ENCODE measurements at regions of chr14 and their contacts with region 1.

Region 1: GRCh38 chr14:96100161-96101029 is 61.2 kb downstream of the C14orf132 start:
- DNase-seq: peak; percentile 80 to 85 (median 81)
- ATAC-seq: peak; percentile 25 to 43 (median 34)
- H3K4me3 ChIP-seq: no peak overlapping the region
- H3K27ac ChIP-seq: peak overlapping the region in 1 of 3 donors; percentile 18
- H3K4me1 ChIP-seq: peaks cover 0 to 56% (median 22%) of the 10 kb centered on the region in 4 donors
- H3K27me3 ChIP-seq: no peaks in the 10 kb centered on the region
- CTCF ChIP-seq: peak; percentile 84 to 93 (median 85)
- POLR2A ChIP-seq: no peak

Region 2: GRCh38 chr14:95614349-95614748 is 486.0 kb before region 1 on chr14:
- intact Hi-C with region 1: no loop called
- DNase-seq: no peak
- ATAC-seq: no peak
- H3K4me3 ChIP-seq: no peak overlapping the region
- H3K27ac ChIP-seq: no peak overlapping the region
- H3K4me1 ChIP-seq: no peaks in the 10 kb centered on the region
- H3K27me3 ChIP-seq: no peaks in the 10 kb centered on the region
- CTCF ChIP-seq: no peak
- POLR2A ChIP-seq: no peak

Region 3: GRCh38 chr14:96001866-96002497 is 98.4 kb before region 1 on chr14:
- intact Hi-C with region 1: loop called in 1 of 2 experiments (anchors 10 kb)
- DNase-seq: no peak
- ATAC-seq: no peak
- H3K4me3 ChIP-seq: no peak overlapping the region
- H3K27ac ChIP-seq: no peak overlapping the region
- H3K4me1 ChIP-seq: no peaks in the 10 kb centered on the region
- H3K27me3 ChIP-seq: no peaks in the 10 kb centered on the region
- CTCF ChIP-seq: no peak
- POLR2A ChIP-seq: no peak

Region 4: DNA sequence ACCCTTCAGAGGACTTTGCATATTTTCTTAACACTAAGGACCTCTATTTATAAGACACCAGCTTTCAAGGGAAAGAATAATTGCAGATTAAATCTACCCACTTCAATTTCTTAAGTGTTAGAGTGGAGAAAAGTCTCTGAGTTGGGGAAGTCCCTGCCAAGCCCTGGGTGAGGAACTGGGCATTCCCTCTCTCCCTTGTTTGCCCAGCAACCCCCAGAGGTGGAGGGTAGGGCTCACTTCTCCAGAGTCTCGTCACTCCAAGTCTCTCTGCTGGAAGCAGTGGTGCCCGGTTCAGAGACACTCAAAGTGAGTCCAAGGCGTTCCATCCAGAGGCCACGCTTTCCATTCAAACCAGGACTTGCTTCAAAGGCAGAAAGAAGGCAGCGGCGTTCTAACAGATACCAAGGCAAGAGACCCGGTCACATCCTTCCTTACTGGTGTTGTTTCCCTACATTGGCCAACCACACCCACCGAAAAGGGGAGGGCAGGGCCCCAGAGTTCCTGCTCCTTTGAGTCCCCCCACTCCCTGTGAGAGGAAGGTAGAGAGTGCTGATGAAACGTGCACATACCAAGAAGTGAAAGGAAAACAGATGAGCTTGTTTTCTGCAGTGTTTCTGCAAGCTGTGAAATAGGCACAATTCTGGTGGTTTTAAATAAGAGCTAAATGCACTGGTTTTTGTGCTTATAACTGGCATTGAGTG is 98.2 kb after region 1 on chr14:
- intact Hi-C with region 1: loop called in 1 of 2 experiments (anchors 10 kb)
- DNase-seq: no peak
- ATAC-seq: peak in 2 of 4 donors; percentile 16 to 48
- H3K4me3 ChIP-seq: no peak overlapping the region
- H3K27ac ChIP-seq: no peak overlapping the region
- H3K4me1 ChIP-seq: peaks cover 0 to 14% (median 0%) of the 10 kb centered on the region in 4 donors
- H3K27me3 ChIP-seq: no peaks in the 10 kb centered on the region
- CTCF ChIP-seq: no peak
- POLR2A ChIP-seq: no peak

Region 5: GRCh38 chr14:96268431-96269358 is 168.3 kb after region 1 on chr14:
- intact Hi-C with region 1: loop called (anchors 5 kb)
- DNase-seq: peak in 1 of 3 donors; percentile 70
- ATAC-seq: peak; percentile 52 to 80 (median 76)
- H3K4me3 ChIP-seq: peak overlapping the region in 1 of 3 donors; percentile 14
- H3K27ac ChIP-seq: peak overlapping the region in 1 of 3 donors; percentile 40
- H3K4me1 ChIP-seq: peaks cover 0 to 11% (median 0%) of the 10 kb centered on the region in 4 donors
- H3K27me3 ChIP-seq: no peaks in the 10 kb centered on the region
- CTCF ChIP-seq: no peak
- POLR2A ChIP-seq: no peak

Region 6: DNA sequence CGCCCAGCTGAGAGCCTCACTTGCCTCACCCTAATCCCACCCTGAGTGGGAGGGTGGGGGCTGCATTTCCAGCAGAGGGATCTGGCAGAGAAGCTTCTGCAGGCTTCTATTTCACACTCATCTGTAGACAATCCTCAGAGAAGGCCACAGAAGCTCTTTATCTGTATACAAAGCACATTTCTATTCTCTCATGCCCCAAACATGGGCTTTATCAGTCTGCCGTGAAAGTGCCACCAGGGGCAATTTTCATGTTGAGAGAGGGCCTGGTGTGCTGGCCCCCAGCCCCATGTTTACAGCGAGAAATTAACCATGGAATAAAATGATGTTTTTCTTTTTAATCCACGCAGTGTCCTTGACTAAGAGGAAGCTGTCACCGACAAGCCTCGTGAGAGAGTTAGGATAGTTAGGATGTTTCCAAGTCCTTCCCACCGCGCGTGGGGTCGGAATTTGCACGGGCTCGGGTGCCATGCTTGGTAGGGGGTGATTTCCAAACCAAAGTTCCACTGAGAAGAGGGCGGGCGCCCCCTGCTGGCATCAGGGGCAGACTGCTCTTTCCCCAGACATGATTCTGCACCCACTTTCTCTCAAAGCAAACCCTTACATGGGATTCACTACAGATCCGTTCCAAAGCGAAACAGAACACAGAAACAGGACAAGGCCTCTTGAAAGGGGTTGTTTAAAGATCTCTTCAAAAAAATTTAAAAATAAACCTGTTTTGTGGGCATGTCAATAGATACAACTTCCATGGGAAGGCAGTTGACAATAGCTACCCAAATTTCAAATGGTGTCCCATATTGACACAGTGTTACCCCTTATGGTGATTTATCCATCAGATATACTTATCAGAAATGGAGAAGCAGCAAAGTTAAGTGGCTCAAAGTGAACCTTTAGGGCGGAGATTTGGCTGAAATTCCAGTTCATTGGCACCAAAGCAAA is 175.1 kb after region 1 on chr14:
- intact Hi-C with region 1: loop called in 1 of 2 experiments (anchors 5 kb)
- DNase-seq: peak; percentile 74 to 76 (median 75)
- ATAC-seq: peak; percentile 74 to 91 (median 84)
- H3K4me3 ChIP-seq: no peak overlapping the region
- H3K27ac ChIP-seq: no peak overlapping the region
- H3K4me1 ChIP-seq: no peaks in the 10 kb centered on the region
- H3K27me3 ChIP-seq: no peaks in the 10 kb centered on the region
- CTCF ChIP-seq: peak; percentile 88 to 97 (median 94)
- POLR2A ChIP-seq: no peak

Measured in right lobe of liver (tissue), 6 donors.